ENCODE measurements at regions of chr6 and their contacts with region 1.

Region 1: DNA sequence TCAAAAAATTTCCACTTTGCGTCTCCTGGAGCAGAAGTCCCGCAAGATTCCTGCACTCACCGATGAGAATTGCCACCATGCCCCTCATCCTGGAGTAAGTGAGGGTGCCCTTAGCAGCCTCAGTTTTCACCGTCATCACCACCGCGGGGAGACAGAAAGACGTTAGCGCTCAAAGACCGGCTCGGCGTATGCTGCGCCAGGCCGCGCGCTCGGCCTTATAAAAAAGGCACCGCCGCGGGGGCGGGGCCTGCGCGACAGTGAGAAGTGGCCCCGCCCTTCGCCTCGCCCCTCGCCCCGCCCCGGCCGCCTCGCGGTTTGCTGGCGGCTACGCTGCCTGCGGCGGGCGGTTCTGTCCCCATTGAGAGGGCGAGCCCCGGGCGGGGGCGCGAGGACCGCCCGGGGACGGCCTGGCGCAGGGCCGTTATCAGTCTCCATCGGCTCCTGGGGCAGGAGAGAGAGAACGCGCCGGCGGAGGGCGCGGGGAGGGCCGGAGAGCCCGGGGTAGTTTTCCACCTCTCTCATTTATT is 122.3 kb upstream of the SLC2A12 start:
- DNase-seq: peak; percentile 94 to 97 (median 95)
- ATAC-seq: peak; percentile 87 to 95 (median 89)
- H3K4me3 ChIP-seq: peak overlapping the region; percentile 72 to 96 (median 80)
- H3K27ac ChIP-seq: peak overlapping the region; percentile 96 to 99 (median 98)
- H3K4me1 ChIP-seq: peaks cover 0 to 68% (median 45%) of the 10 kb centered on the region in 12 donors
- H3K27me3 ChIP-seq: no peaks in the 10 kb centered on the region
- CTCF ChIP-seq: no peak
- POLR2A ChIP-seq: peak; percentile 88 to 99

Region 2: DNA sequence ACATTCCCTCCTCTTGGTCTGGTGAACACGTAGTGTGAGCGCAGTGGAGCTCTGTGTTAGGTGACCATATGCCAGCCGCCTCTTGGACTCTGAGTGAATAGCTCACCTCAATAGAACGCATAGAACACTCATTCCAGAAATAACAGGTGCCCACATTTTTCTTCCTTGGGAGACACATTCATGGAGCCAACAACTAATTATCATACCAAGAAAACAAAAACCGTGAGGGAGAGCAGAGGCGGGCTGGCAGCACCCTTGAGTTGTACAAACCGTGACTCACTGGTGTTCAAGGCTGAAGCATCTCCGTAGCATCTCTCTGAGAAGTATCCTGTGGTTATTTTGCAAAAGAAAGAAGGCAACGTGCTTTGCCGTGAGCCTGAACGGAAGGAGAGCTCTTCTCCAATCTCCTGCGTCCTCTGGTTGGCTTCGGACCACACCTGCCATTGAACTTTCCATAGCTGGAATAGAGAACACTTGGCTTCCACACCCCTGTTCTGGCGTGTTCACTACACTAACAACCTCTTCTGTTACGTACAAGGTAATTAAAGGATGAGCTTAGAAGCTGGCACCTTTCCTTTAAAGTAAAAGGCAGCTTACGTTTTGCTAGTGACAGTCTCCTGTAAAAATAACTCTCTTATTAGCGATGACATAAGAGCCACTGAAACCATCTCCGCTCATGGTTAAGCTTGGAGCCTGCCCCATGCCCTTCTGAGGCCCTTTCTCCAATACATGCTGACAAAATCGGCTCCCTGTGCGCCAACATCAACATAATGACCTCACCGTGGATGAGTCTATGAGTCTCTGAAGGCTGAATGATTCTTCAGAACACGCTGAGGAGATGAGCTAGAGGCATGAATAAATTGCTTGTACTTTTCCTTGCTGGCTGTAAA is 173.4 kb after region 1 on chr6:
- intact Hi-C with region 1: loop called in 7 of 10 experiments (anchors 1 to 10 kb)
- DNase-seq: peak in 4 of 5 donors; percentile 25 to 64 (median 38)
- ATAC-seq: peak in 3 of 4 donors; percentile 23 to 81 (median 81)
- H3K4me3 ChIP-seq: no peak overlapping the region
- H3K27ac ChIP-seq: peak overlapping the region in 5 of 12 donors; percentile 5 to 69 (median 32)
- H3K4me1 ChIP-seq: peaks cover 0 to 44% (median 14%) of the 10 kb centered on the region in 12 donors
- H3K27me3 ChIP-seq: no peaks in the 10 kb centered on the region
- CTCF ChIP-seq: no peak
- POLR2A ChIP-seq: no peak

Region 3: DNA sequence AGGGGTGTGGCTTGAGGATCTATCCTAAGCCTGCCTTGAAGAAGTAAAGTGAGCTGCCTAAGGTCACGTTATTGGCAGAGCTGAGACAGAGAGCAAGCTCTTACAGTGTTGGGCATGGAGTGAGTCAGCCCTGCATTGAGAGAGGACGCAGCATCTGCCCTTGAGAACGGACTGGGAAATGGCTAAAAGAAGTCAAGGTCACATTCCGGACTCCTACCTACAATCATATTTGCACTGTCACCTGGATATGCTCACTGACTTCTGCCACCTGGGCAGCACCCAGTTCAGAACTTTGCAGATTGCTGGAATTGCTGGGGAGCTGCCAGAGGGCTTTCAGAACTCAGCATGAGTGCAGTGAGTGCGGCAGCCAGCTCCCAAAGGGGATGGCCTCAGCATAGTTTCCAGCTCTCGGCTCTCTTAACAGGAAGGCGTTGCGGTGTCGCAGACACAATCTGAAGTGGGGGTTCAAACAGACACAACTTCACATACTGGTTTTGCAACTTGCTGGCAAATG is 342.5 kb after region 1 on chr6:
- intact Hi-C with region 1: loop called in 8 of 10 experiments (anchors 2 to 10 kb)
- DNase-seq: peak; percentile 79 to 92 (median 80)
- ATAC-seq: peak; percentile 89 to 96 (median 94)
- H3K4me3 ChIP-seq: peak overlapping the region in 6 of 12 donors; percentile 2 to 23 (median 10)
- H3K27ac ChIP-seq: peak overlapping the region; percentile 43 to 83 (median 73)
- H3K4me1 ChIP-seq: peaks cover 6 to 55% (median 30%) of the 10 kb centered on the region in 12 donors
- H3K27me3 ChIP-seq: no peaks in the 10 kb centered on the region
- CTCF ChIP-seq: no peak
- POLR2A ChIP-seq: no peak

Region 4: GRCh38 chr6:134640975-134641429 is 466.3 kb after region 1 on chr6:
- intact Hi-C with region 1: loop called (anchors 1 to 5 kb)
- DNase-seq: peak; percentile 67 to 78 (median 77)
- ATAC-seq: peak; percentile 85 to 92 (median 89)
- H3K4me3 ChIP-seq: no peak overlapping the region
- H3K27ac ChIP-seq: peak overlapping the region in 3 of 12 donors; percentile 9 to 53 (median 36)
- H3K4me1 ChIP-seq: peaks cover 0 to 27% (median 6%) of the 10 kb centered on the region in 12 donors
- H3K27me3 ChIP-seq: no peaks in the 10 kb centered on the region
- CTCF ChIP-seq: peak; percentile 89 to 99 (median 94)
- POLR2A ChIP-seq: no peak

Region 5: GRCh38 chr6:134882426-134883038 is 707.8 kb after region 1 on chr6:
- intact Hi-C with region 1: loop called in 7 of 10 experiments (anchors 1 to 5 kb)
- DNase-seq: peak in 4 of 5 donors; percentile 21 to 67 (median 49)
- ATAC-seq: peak in 3 of 4 donors; percentile 36 to 68 (median 65)
- H3K4me3 ChIP-seq: no peak overlapping the region
- H3K27ac ChIP-seq: no peak overlapping the region
- H3K4me1 ChIP-seq: peaks cover 0 to 5% (median 0%) of the 10 kb centered on the region in 12 donors
- H3K27me3 ChIP-seq: peaks cover 0 to 3% (median 0%) of the 10 kb centered on the region in 9 donors
- CTCF ChIP-seq: peak; percentile 52 to 99 (median 88)
- POLR2A ChIP-seq: no peak

Measured in heart left ventricle (tissue), 16 donors.